ENCODE measurements at regions of chr1 and their contacts with region 1.

Region 1: GRCh38 chr1:181062836-181063428 is 25.6 kb upstream of the IER5 start:
- DNase-seq: peak; percentile 87
- ATAC-seq: peak; percentile 90
- H3K4me3 ChIP-seq: no peak overlapping the region
- H3K27ac ChIP-seq: peak overlapping the region; percentile 96
- H3K4me1 ChIP-seq: peaks cover 32% of the 10 kb centered on the region
- H3K27me3 ChIP-seq: no peaks in the 10 kb centered on the region
- CTCF ChIP-seq: no peak
- EP300 ChIP-seq: 0 out of 4 replicates have a peak, but pooled peaks of 1 of the 2 experiments have one; percentile 25
- POLR2A ChIP-seq: 0 out of 2 replicates have a peak, but pooled peaks have one; percentile 3
- RAD21 ChIP-seq: no peak

Region 2: GRCh38 chr1:181021811-181022434 is 41.0 kb before region 1 on chr1:
- CTCF ChIA-PET with region 1: interaction called, 3 read pairs
- POLR2A ChIA-PET with region 1: interaction called, 3 read pairs
- RAD21 ChIA-PET with region 1: interaction called, 4 read pairs
- SMC1A ChIA-PET with region 1: interaction called, 11 read pairs
- in situ Hi-C with region 1: no loop called
- intact Hi-C with region 1: no loop called
- DNase-seq: no peak
- ATAC-seq: peak; percentile 76
- H3K4me3 ChIP-seq: peak overlapping the region; percentile 90
- H3K27ac ChIP-seq: peak overlapping the region; percentile 89
- H3K4me1 ChIP-seq: peaks cover 12% of the 10 kb centered on the region
- H3K27me3 ChIP-seq: no peaks in the 10 kb centered on the region
- CTCF ChIP-seq: no peak
- EP300 ChIP-seq: no peak
- POLR2A ChIP-seq: no peak
- RAD21 ChIP-seq: no peak

Region 3: GRCh38 chr1:181044449-181044966 is 18.4 kb before region 1 on chr1:
- CTCF ChIA-PET with region 1: interaction called, 30 read pairs
- POLR2A ChIA-PET with region 1: interaction called, 12 read pairs
- RAD21 ChIA-PET with region 1: interaction called, 26 read pairs
- SMC1A ChIA-PET with region 1: interaction called, 31 read pairs
- in situ Hi-C with region 1: no loop called
- intact Hi-C with region 1: loop called (anchors 1 kb)
- DNase-seq: peak; percentile 60
- ATAC-seq: peak; percentile 95
- H3K4me3 ChIP-seq: no peak overlapping the region; the same call in 1 of the 2 replicates
- H3K27ac ChIP-seq: peak overlapping the region; percentile 81
- H3K4me1 ChIP-seq: peaks cover 20% of the 10 kb centered on the region
- H3K27me3 ChIP-seq: no peaks in the 10 kb centered on the region
- CTCF ChIP-seq: no peak
- EP300 ChIP-seq: peak in 1 of 2 experiments; percentile 44; a peak in 1 of 4 replicates
- POLR2A ChIP-seq: peak; percentile 51; the same call in 1 of the 2 replicates
- RAD21 ChIP-seq: no peak

Region 4: DNA sequence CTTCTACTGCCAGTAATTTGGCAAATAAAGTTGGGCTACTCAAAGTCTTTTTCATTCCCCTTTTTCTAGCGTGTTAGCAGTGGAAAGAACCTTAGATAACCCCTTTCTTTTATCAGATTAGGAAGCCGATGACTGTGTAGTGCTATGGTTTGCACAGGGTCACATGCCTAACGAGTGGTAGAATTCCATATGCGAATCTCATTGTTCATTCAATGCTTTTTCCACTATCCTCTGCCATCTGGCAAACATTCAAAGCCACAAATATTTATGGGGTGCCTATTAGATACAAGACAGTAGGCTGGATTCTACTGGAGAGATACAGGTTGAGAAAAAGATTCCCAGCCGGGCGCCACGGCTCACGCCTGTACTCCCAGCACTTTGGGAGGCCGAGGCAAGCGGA is 10.7 kb after region 1 on chr1:
- CTCF ChIA-PET with region 1: interaction called, 19 read pairs
- POLR2A ChIA-PET with region 1: interaction called, 6 read pairs
- RAD21 ChIA-PET with region 1: interaction called, 37 read pairs
- SMC1A ChIA-PET with region 1: interaction called, 53 read pairs
- in situ Hi-C with region 1: no loop called
- intact Hi-C with region 1: no loop called
- DNase-seq: no peak
- ATAC-seq: no peak
- H3K4me3 ChIP-seq: no peak overlapping the region
- H3K27ac ChIP-seq: no peak overlapping the region
- H3K4me1 ChIP-seq: peaks cover 19% of the 10 kb centered on the region
- H3K27me3 ChIP-seq: no peaks in the 10 kb centered on the region
- CTCF ChIP-seq: no peak
- EP300 ChIP-seq: no peak
- POLR2A ChIP-seq: no peak
- RAD21 ChIP-seq: no peak

Region 5: DNA sequence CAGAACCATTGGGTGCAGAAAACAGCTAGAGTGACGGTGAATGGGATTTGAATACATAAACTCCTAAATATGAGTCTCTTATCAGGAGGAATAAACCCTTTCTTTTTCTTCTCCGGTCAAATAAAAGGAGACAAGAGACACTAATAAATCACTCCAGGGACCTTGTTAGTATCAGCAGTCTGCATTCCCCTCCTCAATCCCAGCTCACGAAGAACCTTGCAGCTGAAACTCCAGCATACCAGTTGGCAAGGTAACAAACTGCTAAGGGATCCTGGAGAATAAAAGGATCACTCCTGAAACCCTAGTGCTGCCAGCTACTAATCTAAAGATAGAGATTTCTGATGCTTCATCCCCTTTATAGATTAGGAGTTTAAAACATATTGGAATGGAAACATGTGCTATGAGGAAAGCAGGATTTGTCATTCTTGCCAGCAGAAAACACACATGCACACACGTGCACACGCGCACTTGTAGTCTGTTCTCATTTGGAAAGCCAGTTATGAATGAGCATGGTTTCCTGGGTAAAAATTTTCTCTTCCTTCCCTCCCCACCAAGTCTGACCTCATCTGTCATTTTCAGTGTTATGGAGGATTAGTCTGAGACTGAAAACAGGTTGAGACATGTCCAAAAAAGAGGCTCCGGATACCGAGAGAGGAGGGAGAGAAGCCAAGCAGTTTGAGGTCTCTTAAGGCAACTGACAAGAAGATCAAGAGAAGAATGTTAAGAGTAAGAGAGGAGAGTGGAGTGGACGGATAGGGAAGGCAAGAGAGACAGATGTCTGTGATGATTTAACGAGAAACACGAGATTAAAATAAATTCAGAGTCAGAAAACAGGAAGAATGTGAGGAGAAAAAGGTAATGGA is 36.5 kb after region 1 on chr1:
- CTCF ChIA-PET with region 1: interaction called, 8 read pairs
- POLR2A ChIA-PET with region 1: interaction called, 11 read pairs
- RAD21 ChIA-PET with region 1: interaction called, 12 read pairs
- SMC1A ChIA-PET with region 1: interaction called, 8 read pairs
- in situ Hi-C with region 1: no loop called
- intact Hi-C with region 1: no loop called
- DNase-seq: peak; percentile 95
- ATAC-seq: peak; percentile 60
- H3K4me3 ChIP-seq: peak overlapping the region; percentile 18
- H3K27ac ChIP-seq: peak overlapping the region; percentile 89
- H3K4me1 ChIP-seq: peaks cover 86% of the 10 kb centered on the region
- H3K27me3 ChIP-seq: no peaks in the 10 kb centered on the region
- CTCF ChIP-seq: no peak
- EP300 ChIP-seq: peak; percentile 67 to 90; a peak in 3 of 4 replicates
- POLR2A ChIP-seq: no peak
- RAD21 ChIP-seq: no peak; the same call in 1 of the 2 replicates

Region 6: DNA sequence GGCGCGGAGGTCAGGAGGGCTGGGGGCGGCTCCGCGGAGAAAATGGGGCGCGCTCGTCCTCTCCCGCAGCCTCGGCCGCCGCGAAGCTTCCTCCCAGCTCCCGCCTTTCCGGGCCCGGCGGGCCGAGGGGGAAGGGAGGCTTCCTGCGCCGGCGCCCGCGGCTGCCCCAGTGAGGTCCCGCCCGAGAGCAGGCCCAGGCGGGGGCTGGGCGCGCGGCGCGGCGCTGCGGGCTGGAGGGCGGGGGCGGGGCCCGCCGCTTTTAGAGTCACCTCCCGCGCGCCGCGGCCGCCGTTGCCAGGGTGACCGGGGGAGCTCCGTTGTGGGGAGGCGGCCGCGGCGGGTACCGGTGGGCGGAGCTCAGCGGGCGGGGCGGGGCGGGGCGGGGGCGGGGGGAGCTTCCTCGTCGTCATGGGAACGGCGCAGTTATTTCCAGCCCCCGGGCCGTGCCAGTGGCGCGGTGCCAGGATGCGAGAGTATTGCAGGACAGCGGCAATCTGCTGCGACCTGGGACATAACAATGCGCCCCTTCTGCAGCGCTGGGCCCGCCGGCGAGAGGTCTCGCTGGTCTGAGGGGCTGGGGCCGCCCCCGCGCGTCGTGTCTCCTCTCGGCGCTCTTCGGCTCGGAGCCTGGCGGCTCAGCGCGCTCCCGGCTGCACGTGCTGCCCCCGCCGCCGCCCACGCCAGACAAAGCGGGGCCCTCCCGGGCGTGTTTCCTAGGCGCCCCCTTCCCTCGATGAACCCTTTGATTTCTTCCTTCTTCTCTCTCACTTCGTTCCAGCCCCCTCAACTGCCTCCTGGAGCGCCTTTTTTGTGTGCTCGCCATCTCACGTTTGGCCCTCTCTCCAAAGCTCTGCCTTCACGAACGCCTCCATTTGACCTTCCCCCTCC is 42.4 kb after region 1 on chr1:
- CTCF ChIA-PET with region 1: no interaction called
- POLR2A ChIA-PET with region 1: interaction called, 3 read pairs
- RAD21 ChIA-PET with region 1: interaction called, 12 read pairs
- SMC1A ChIA-PET with region 1: interaction called, 3 read pairs
- in situ Hi-C with region 1: no loop called
- intact Hi-C with region 1: no loop called
- DNase-seq: no peak
- ATAC-seq: peak; percentile 82
- H3K4me3 ChIP-seq: peak overlapping the region; percentile 94
- H3K27ac ChIP-seq: peak overlapping the region; percentile 70
- H3K4me1 ChIP-seq: peaks cover 44% of the 10 kb centered on the region
- H3K27me3 ChIP-seq: no peaks in the 10 kb centered on the region
- CTCF ChIP-seq: no peak
- EP300 ChIP-seq: no peak
- POLR2A ChIP-seq: peak; percentile 65
- RAD21 ChIP-seq: no peak

Region 7: GRCh38 chr1:181134543-181135362 is 71.8 kb after region 1 on chr1:
- CTCF ChIA-PET with region 1: interaction called, 35 read pairs
- POLR2A ChIA-PET with region 1: interaction called, 6 read pairs
- RAD21 ChIA-PET with region 1: interaction called, 7 read pairs
- SMC1A ChIA-PET with region 1: interaction called, 46 read pairs
- in situ Hi-C with region 1: no loop called
- intact Hi-C with region 1: loop called (anchors 2 kb)
- DNase-seq: peak; percentile 91
- ATAC-seq: peak; percentile 57
- H3K4me3 ChIP-seq: peak overlapping the region; percentile 66
- H3K27ac ChIP-seq: peak overlapping the region; percentile 92
- H3K4me1 ChIP-seq: peaks cover 73% of the 10 kb centered on the region
- H3K27me3 ChIP-seq: no peaks in the 10 kb centered on the region
- CTCF ChIP-seq: no peak
- EP300 ChIP-seq: peak; percentile 4 to 40; a peak in 2 of 4 replicates
- POLR2A ChIP-seq: peak; percentile 81
- RAD21 ChIP-seq: no peak

Region 8: GRCh38 chr1:181778640-181779260 is 715.8 kb after region 1 on chr1:
- CTCF ChIA-PET with region 1: no interaction called
- POLR2A ChIA-PET with region 1: no interaction called
- RAD21 ChIA-PET with region 1: no interaction called
- SMC1A ChIA-PET with region 1: no interaction called
- in situ Hi-C with region 1: no loop called
- intact Hi-C with region 1: no loop called
- DNase-seq: no peak
- ATAC-seq: no peak
- H3K4me3 ChIP-seq: no peak overlapping the region
- H3K27ac ChIP-seq: no peak overlapping the region
- H3K4me1 ChIP-seq: no peaks in the 10 kb centered on the region
- H3K27me3 ChIP-seq: no peaks in the 10 kb centered on the region
- CTCF ChIP-seq: no peak
- EP300 ChIP-seq: no peak
- POLR2A ChIP-seq: no peak
- RAD21 ChIP-seq: no peak